Breast epithelium (tissue), 4 donors: ENCODE measurements at regions of chr2 and their contacts with region 1.

Region 1: DNA sequence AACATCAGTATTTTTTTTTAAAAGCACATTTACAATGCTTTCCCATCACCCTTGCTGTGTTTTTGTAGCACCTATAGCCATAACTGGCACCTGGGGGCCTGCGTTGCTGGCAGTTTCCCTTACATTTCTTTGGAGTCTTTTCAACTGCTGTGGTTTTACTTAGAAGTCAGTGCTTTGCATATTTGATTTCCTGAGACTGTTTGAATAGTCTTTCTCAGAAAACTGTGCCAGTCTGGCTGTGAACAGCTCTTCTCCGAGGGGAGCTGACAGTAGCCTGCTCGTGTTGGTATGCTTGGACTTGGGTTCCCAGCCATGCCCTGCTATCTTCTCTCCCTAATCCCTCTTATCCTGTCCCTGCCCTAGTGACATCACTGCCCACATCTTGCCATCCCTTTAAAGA is 81.5 kb downstream of the DPP4 start:
- DNase-seq: no peak
- H3K4me3 ChIP-seq: no peak overlapping the region
- H3K27ac ChIP-seq: no peak overlapping the region
- H3K4me1 ChIP-seq: peaks cover 0 to 3% of the 10 kb centered on the region in 2 donors
- H3K27me3 ChIP-seq: no peaks in the 10 kb centered on the region
- CTCF ChIP-seq: no peak
- POLR2A ChIP-seq: no peak

Region 2: DNA sequence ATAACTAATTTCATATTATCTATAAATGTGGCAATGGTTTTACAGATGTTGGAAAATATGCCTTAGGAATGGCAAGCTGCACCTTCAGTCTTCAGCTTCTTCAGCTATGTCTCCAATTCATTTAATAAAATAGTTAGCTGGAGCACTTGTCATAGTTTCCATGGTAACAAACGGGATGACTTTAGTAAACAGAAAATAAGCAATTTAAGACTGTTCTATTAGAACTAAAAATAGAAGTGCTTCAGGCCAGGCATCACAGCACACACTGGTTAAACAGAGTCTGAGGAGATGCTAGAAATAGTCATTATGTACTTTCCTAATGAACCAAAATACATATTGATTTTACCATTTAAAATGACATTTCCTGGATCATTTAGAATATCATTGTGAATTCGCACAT is 546.4 kb after region 1 on chr2:
- intact Hi-C with region 1: loop called (anchors 5 kb)
- DNase-seq: no peak
- H3K4me3 ChIP-seq: no peak overlapping the region
- H3K27ac ChIP-seq: no peak overlapping the region
- H3K4me1 ChIP-seq: no peaks in the 10 kb centered on the region
- H3K27me3 ChIP-seq: no peaks in the 10 kb centered on the region
- CTCF ChIP-seq: no peak
- POLR2A ChIP-seq: no peak